ENCODE measurements at regions of chr18 and their contacts with region 1.

Region 1: DNA sequence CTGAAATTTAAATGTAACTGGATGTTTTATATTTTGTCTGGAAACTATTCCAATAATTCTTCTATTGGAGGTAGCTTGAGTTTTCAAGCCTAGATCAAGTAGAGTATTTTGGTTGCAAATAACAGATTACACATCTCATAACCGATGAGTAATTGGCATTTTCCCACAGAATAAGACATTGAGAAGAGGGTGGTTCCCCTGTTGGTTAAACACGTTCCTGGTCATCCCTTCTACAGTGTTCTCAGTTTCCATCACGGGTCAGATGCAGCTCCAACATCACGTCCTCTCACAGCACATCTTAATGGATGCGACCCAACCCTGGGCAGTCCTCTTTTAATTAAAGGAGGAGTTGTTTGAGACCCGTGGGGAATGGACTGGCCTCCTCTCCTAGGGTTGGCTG is 149.0 kb upstream of the ZNF516 start:
- DNase-seq: no peak
- ATAC-seq: no peak
- H3K4me3 ChIP-seq: no peak overlapping the region
- H3K27ac ChIP-seq: no peak overlapping the region
- H3K4me1 ChIP-seq: no peaks in the 10 kb centered on the region
- H3K27me3 ChIP-seq: peaks cover 11% of the 10 kb centered on the region; the same call in 1 of the 2 replicates
- CTCF ChIP-seq: no peak
- POLR2A ChIP-seq: no peak
- RAD21 ChIP-seq: no peak

Region 2: DNA sequence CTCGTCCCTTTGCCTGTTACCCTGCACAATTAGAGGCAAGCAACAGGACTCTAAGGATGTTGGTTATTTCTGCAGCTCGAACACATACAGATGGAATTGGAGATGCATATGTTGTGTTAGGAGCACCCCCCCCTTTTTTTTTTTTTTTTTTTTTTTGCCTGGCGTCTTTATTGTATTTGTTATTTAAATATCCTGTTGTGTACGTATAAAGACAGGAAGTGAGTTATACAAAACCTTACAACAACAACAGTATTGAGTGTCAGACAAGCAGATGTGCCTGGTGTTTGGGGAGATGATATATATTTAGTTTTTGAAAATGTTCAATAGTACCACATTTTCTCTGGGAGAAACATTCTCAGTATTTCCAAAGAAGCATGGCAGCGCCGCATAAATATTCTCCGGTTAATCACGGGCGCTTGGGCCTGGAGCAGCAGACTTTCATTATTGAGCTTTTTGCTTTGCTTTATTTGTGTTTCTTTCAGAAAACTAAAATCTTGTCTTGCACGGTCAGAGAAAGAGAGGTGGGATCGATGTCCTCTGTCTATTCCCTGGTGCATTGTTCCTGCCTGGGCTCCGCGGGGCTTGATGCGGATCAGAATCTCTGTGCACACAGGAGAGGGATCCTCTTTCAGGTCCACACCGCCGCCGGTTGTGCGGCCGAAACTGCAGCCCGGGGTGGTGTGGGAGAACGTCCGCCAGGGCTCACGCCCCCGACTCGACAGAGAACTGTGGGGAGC is 125.7 kb before region 1 on chr18:
- CTCF ChIA-PET with region 1: no interaction called
- POLR2A ChIA-PET with region 1: no interaction called
- dilution Hi-C with region 1: no loop called
- in situ Hi-C with region 1: no loop called
- intact Hi-C with region 1: no loop called
- DNase-seq: peak; percentile 32
- ATAC-seq: peak; percentile 90
- H3K4me3 ChIP-seq: peak overlapping the region; percentile 41
- H3K27ac ChIP-seq: peak overlapping the region; percentile 56; the same call in 1 of the 2 replicates
- H3K4me1 ChIP-seq: peaks cover 2% of the 10 kb centered on the region; the same call in 1 of the 2 replicates
- H3K27me3 ChIP-seq: no peaks in the 10 kb centered on the region
- CTCF ChIP-seq: no peak
- POLR2A ChIP-seq: no peak
- RAD21 ChIP-seq: no peak

Region 3: GRCh38 chr18:76958692-76959341 is 314.8 kb after region 1 on chr18:
- CTCF ChIA-PET with region 1: no interaction called
- POLR2A ChIA-PET with region 1: interaction called, 12 read pairs
- dilution Hi-C with region 1: no loop called
- in situ Hi-C with region 1: no loop called
- intact Hi-C with region 1: no loop called
- DNase-seq: no peak
- ATAC-seq: no peak
- H3K4me3 ChIP-seq: no peak overlapping the region
- H3K27ac ChIP-seq: no peak overlapping the region
- H3K4me1 ChIP-seq: no peaks in the 10 kb centered on the region; the same call in 1 of the 2 replicates
- H3K27me3 ChIP-seq: no peaks in the 10 kb centered on the region
- CTCF ChIP-seq: no peak
- POLR2A ChIP-seq: no peak
- RAD21 ChIP-seq: no peak

Measured in IMR-90 (cell line).